Activated naive CD4-positive, alpha-beta T cell treated with anti-CD3 and anti-CD28 coated beads for 36 hours (primary cell): ENCODE measurements at regions of chr19 and their contacts with region 1.

Region 1: DNA sequence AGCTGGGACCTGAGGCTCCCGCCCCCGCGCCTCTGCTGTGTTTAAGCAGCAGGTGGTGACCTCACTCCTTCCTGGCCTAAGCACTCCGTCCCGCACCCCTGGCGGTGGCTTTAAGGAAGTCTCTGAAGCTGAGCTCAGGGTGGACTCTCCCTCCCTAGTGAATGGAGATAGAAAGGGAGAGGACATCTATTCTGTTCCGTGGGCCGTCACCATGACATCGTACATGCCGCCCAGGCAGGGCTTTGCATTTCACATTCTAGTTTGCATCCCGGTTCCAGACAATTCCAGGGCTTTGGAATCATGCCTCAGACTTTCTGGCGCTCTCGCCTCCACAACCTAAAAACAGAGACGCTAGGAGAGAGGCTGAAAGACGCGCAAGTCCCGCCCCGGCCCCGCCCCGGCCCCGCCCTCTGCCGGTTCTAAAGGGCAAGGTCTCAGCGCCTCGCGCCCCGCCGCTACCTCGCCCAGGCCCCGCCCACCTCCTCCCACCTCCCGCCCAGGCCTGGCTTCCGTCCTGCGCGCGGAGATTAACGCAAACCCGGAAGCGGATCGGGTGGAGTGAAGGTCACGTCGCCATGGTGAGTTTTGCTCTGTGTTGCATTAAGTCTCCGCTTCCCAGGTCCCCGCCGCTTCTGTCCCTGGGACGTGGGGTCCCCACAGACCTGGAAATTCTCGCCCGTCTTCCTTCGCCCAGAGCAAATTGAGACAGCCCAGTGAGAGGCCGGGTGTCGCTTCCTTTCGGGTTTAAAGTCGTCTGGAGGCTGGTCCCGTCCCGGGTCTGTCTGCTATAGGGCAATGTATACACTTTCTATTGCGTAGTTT is at the start of gene ZNF808:
- DNase-seq: peak; percentile 98
- H3K4me3 Mint-ChIP-seq: peak within 1 kb of the TSS; percentile 97
- H3K27ac Mint-ChIP-seq: peak within 1 kb of the TSS; percentile 95
- H3K4me1 Mint-ChIP-seq: peaks cover 17% of the 10 kb centered on the region
- H3K27me3 Mint-ChIP-seq: no peaks in the 10 kb centered on the region
- total RNA-seq, gene ZNF808: 19.1 to 20.1 TPM

Region 2: GRCh38 chr19:52397310-52398080 is 129.8 kb before region 1 on chr19 and contains the start of gene ZNF528:
- CTCF ChIA-PET with region 1: no interaction called
- intact Hi-C with region 1: loop called (anchors 5 kb)
- DNase-seq: peak; percentile 95
- H3K4me3 Mint-ChIP-seq: peak within 1 kb of the TSS; percentile 76
- H3K27ac Mint-ChIP-seq: peak within 1 kb of the TSS; percentile 75
- H3K4me1 Mint-ChIP-seq: peaks cover 15% of the 10 kb centered on the region
- H3K27me3 Mint-ChIP-seq: no peaks in the 10 kb centered on the region
- total RNA-seq, gene ZNF528: 2.9 to 3.7 TPM

Region 3: GRCh38 chr19:52554216-52554971 is 27.0 kb after region 1 on chr19:
- CTCF ChIA-PET with region 1: no interaction called
- intact Hi-C with region 1: no loop called
- DNase-seq: no peak
- H3K4me3 Mint-ChIP-seq: no peak overlapping the region
- H3K27ac Mint-ChIP-seq: no peak overlapping the region
- H3K4me1 Mint-ChIP-seq: no peaks in the 10 kb centered on the region
- H3K27me3 Mint-ChIP-seq: no peaks in the 10 kb centered on the region

Region 4: GRCh38 chr19:52601025-52601973 is 74.0 kb after region 1 on chr19:
- CTCF ChIA-PET with region 1: no interaction called
- intact Hi-C with region 1: loop called (anchors 5 kb)
- DNase-seq: peak; percentile 95
- H3K4me3 Mint-ChIP-seq: peak overlapping the region; percentile 79
- H3K27ac Mint-ChIP-seq: peak overlapping the region; percentile 79
- H3K4me1 Mint-ChIP-seq: peaks cover 18% of the 10 kb centered on the region
- H3K27me3 Mint-ChIP-seq: no peaks in the 10 kb centered on the region

Region 5: GRCh38 chr19:52734893-52735661 is 207.7 kb after region 1 on chr19 and contains the start of gene ZNF611:
- CTCF ChIA-PET with region 1: no interaction called
- intact Hi-C with region 1: loop called (anchors 1 kb)
- DNase-seq: peak; percentile 99
- H3K4me3 Mint-ChIP-seq: peak within 1 kb of the TSS; percentile 85
- H3K27ac Mint-ChIP-seq: peak within 1 kb of the TSS; percentile 89
- H3K4me1 Mint-ChIP-seq: peaks cover 19% of the 10 kb centered on the region
- H3K27me3 Mint-ChIP-seq: no peaks in the 10 kb centered on the region
- total RNA-seq, gene ZNF611: 10.4 to 12.1 TPM